ENCODE measurements at regions of chr19 and their contacts with region 1.

Region 1: DNA sequence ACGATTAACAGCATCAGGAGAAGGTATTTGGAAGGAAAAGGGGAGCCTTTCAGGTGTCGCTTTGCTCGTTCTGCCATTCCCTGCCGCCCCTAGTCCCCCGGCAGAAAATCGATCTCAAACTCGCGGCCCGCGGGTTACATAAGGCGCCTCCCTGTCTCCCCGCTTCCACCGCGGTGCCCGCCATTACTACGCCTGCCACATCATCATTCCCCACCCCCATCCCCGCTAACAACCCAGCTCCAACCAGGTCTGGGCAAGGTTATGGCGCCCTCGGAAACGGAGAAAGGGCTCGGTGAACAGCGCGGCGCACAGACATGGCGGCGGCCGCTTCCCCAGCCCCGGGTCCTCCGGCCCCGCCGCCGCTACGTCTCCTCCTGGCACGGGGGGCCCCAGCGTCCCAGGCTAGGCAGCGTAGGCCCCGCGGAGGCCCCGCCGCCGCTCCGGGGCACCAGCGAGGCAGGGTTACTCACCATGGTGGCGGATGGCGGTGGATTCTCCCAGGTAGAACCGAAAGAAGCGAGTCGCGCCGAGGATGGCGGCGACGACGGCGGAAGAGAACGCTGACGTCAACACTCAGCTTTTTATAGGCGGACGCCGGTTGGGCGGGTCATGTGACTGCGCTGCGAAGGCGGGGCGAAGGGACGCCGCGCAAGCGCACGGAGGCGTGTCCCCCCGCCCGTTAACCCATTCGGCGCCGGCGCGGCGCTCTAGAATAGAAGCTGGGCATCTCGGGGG is at the start of gene EEF2:
- DNase-seq: peak; percentile 86
- H3K4me3 ChIP-seq: peak within 1 kb of the TSS; percentile 97
- H3K27ac ChIP-seq: peak within 1 kb of the TSS; percentile 82
- H3K27me3 ChIP-seq: no peaks in the 10 kb centered on the region
- CTCF ChIP-seq: no peak
- polyA plus RNA-seq, gene EEF2: 1,648 and 1,697 TPM in 2 replicates

Region 2: GRCh38 chr19:3762501-3763459 is 222.3 kb before region 1 on chr19 and contains the start of gene MRPL54:
- CTCF ChIA-PET with region 1: interaction called, 6 read pairs
- POLR2A ChIA-PET with region 1: interaction called, 13 read pairs
- DNase-seq: peak; percentile 98
- H3K4me3 ChIP-seq: peak within 1 kb of the TSS; percentile 99
- H3K27ac ChIP-seq: peak within 1 kb of the TSS; percentile 98
- H3K27me3 ChIP-seq: no peaks in the 10 kb centered on the region
- CTCF ChIP-seq: no peak
- polyA plus RNA-seq, gene MRPL54: 31.2 and 36.9 TPM in 2 replicates

Region 3: DNA sequence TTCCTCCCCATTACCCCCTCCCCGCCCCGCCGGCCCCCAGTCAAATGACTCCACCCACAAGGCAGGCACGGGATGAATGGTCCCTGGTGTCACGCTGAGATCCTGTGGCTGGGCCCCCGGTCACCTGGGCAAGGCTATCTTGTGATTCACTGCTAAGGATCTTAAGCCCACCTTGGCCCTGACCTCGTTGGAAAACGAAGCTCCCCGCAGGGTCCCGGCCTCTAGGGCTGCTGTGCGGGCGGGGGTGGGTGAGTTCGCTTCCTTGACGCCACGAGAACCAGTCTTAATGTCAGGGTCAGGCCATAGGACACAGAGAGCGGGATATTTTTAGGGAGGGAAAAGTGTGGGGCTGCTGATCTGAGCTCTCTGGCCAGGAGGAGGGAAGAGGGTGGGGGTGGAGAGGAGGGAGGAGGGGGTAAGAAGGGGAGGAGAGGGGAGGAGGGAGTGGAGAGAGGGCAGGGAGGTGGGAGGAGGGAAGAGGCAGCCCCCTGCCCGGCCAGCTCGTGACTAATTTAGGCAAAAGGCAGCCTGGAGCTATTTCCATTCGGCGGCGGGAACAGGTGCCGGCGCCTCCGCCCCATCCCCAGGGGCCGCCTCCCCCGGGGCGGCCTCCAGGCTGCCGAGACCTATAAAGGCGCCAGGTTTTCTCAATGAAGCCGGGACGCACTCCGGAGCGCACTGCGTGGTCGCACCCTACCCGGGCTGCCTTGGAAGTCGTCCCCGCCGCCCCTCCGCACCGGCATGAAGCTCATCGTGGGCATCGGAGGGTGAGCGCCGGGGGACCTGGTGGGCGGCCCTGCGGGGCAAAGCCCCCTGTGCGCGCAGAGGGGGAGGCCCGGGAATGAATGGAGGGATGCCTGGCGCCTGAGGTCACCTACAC is 51.9 kb before region 1 on chr19 and contains the start of gene NMRK2:
- CTCF ChIA-PET with region 1: no interaction called
- POLR2A ChIA-PET with region 1: no interaction called
- DNase-seq: no peak
- H3K4me3 ChIP-seq: no peak within 1 kb of the TSS
- H3K27ac ChIP-seq: no peak within 1 kb of the TSS
- H3K27me3 ChIP-seq: peaks cover 22% of the 10 kb centered on the region
- CTCF ChIP-seq: no peak
- polyA plus RNA-seq, gene NMRK2: not detected in 2 replicates

Region 4: GRCh38 chr19:3995627-3996026 is 10.6 kb after region 1 on chr19:
- CTCF ChIA-PET with region 1: interaction called, 15 read pairs
- POLR2A ChIA-PET with region 1: interaction called, 7 read pairs
- DNase-seq: no peak
- H3K4me3 ChIP-seq: no peak overlapping the region
- H3K27ac ChIP-seq: no peak overlapping the region
- H3K27me3 ChIP-seq: no peaks in the 10 kb centered on the region
- CTCF ChIP-seq: no peak

Region 5: DNA sequence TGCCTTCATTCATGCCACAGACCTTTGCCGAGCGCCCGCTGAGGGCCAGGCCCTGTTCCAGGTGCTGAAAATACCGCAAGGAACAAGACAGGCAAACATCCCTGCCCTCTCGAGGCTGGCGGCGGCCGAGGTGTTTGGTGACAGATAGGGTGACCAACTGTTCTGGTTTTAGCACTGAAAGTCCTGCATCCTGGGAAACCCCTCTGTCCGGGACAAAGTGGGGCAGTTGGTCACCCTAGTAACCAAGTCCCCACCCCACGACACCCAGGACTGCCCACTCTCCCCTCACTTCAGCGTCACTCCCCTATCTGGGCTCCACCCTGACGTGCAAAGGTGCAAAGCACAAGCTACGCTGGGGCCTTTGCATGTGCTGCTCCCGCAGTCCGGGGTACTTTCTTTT is 64.4 kb after region 1 on chr19:
- CTCF ChIA-PET with region 1: interaction called, 10 read pairs
- POLR2A ChIA-PET with region 1: interaction called, 4 read pairs
- DNase-seq: no peak
- H3K4me3 ChIP-seq: no peak overlapping the region
- H3K27ac ChIP-seq: no peak overlapping the region
- H3K27me3 ChIP-seq: no peaks in the 10 kb centered on the region
- CTCF ChIP-seq: no peak

Region 6: GRCh38 chr19:4086411-4086878 is 101.4 kb after region 1 on chr19:
- CTCF ChIA-PET with region 1: interaction called, 10 read pairs
- POLR2A ChIA-PET with region 1: no interaction called
- DNase-seq: no peak
- H3K4me3 ChIP-seq: no peak overlapping the region
- H3K27ac ChIP-seq: peak overlapping the region; percentile 21
- H3K27me3 ChIP-seq: no peaks in the 10 kb centered on the region
- CTCF ChIP-seq: no peak

Region 7: GRCh38 chr19:4199699-4200293 is 214.7 kb after region 1 on chr19:
- CTCF ChIA-PET with region 1: interaction called, 10 read pairs
- POLR2A ChIA-PET with region 1: interaction called, 18 read pairs
- DNase-seq: no peak
- H3K4me3 ChIP-seq: no peak overlapping the region
- H3K27ac ChIP-seq: no peak overlapping the region
- H3K27me3 ChIP-seq: peaks cover 20% of the 10 kb centered on the region
- CTCF ChIP-seq: no peak

Measured in AG04450 (cell line).